Activated CD4-positive, alpha-beta T cell treated with anti-CD3 and anti-CD28 coated beads, Interleukin-2, amount 10 ng/mL, durations not matched to agents 24 days and 14 days (primary cell): ENCODE measurements at regions of chr12 and their contacts with region 1.

Region 1: DNA sequence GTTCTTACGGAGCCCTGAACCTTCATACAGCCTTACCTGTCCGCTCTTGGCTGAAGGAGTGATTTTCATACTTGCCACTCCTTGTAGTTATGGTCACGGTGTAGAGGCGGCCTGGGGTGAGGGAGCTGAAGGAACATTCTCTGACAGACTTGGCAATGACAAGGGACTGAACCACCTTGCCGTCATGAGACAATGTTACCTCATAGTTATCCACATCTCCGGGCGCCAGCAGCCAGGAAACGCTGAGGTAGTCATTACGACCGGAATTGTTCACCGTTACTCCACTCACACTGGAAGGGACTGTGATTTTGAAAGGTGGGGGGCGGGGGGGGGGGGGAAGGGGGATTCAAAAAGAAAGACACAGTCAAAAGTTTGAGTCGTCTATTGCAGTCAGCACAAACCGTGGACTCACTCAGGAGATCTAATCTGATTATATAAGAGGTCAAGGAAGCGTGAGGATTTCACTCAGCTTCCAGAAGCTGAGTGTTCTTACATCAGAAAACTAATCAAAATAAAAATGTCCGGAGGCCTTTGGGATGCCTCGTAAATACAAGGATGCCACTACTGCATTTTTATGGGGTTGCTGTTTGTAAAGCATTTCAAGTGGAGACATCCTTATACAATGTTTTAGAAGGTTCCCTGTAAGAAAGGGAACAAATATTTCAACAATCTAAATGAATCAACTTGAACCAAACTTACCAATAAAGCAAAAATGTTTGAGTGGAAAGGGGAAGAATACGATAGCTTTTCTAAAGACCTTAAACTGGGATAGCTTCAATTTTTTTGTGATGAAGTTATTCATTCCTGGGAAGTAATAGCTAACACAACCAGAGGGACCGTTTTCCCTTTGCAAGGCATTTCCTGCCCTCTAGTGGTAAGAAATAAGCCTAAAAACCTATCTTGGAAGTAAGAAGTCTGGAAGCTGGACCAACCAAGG is 60.6 kb downstream of the PTPRB start:
- DNase-seq: peak; percentile 57
- H3K4me3 Mint-ChIP-seq: no peak overlapping the region
- H3K27ac Mint-ChIP-seq: no peak overlapping the region
- H3K4me1 Mint-ChIP-seq: no peaks in the 10 kb centered on the region
- H3K27me3 Mint-ChIP-seq: peaks cover 2% of the 10 kb centered on the region

Region 2: DNA sequence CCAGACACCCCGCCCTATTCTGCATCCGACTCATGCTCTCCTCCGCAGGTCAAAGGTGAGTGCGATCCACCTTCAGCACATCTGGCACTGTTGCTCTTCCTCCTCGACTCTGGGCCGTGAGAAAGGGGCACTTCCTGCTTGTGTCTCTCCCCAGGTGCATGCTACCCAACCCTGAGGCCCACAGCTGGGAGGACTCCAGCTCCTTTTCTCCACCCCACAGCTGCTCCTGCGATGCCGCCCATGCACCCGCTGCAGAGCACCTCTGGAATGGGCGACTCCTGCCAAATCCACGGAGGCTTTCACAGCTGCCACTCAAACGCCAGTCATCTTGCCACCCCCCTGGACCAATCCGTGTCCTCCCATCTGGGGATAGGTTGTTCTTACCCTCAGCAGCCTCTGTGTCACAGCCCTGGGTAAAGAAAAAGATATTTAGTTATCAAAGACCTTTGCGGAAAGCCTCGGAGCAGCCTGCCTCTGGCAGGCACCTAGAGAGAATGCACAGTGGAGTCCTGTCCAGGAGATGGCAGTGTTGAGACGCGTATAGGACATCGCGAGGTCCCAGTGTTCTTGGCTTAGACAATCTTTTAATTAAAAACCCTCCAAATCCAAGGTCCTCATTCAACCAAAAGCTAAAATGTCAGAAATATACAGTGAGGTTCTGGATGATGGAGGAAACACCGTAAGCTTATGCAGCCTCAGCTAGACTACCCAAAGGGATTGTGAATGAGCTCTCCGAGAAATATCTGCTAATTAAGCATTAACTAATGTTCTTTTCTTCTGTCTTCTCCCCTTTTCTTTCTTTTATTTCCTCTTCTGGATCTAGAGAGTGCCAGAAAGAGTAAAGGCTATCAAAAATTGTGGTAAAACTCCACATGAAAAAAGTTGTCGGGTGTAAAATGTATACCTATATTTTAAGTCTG is 697.3 kb before region 1 on chr12:
- intact Hi-C with region 1: loop called (anchors 1 kb)
- DNase-seq: peak; percentile 87
- H3K4me3 Mint-ChIP-seq: no peak overlapping the region
- H3K27ac Mint-ChIP-seq: no peak overlapping the region
- H3K4me1 Mint-ChIP-seq: peaks cover 5% of the 10 kb centered on the region
- H3K27me3 Mint-ChIP-seq: peaks cover 16% of the 10 kb centered on the region

Region 3: GRCh38 chr12:69900720-69901131 is 675.9 kb before region 1 on chr12:
- intact Hi-C with region 1: loop called (anchors 1 kb)
- DNase-seq: peak; percentile 87
- H3K4me3 Mint-ChIP-seq: no peak overlapping the region
- H3K27ac Mint-ChIP-seq: no peak overlapping the region
- H3K4me1 Mint-ChIP-seq: no peaks in the 10 kb centered on the region
- H3K27me3 Mint-ChIP-seq: peaks cover 2% of the 10 kb centered on the region

Region 4: DNA sequence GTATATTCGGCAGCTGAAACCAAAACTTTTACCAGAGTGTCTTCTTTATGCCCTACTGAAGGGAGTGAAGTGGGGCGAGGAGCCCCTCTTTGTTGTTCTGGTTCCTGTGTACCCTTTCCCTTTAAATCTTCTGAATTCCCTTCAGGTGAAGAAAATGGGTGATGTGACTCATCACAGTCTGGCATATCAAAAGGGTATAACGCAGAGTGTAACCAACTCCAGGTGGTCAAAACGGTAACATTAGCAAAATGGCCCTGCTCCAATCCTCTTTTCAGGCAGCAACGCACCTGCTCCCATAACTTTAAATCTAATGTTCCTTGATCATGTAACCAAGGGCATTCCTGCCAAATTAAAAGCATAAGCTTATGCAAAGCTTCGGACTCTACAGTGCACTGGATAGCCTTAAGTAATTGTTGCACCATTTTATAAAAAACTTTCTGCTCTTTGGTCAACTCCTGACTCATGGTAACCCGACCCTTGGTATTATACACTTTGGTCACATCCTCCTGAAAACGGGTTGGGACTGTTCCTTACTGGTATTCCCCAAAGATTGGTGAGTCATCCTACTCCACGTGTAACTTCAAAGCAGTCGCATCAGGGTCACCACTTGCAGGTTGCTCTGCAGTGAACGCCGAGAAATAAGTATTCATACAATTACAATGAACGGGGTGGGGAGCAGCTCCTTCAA is 127.4 kb before region 1 on chr12:
- intact Hi-C with region 1: no loop called
- DNase-seq: no peak
- H3K4me3 Mint-ChIP-seq: no peak overlapping the region
- H3K27ac Mint-ChIP-seq: no peak overlapping the region
- H3K4me1 Mint-ChIP-seq: no peaks in the 10 kb centered on the region
- H3K27me3 Mint-ChIP-seq: no peaks in the 10 kb centered on the region

Region 5: GRCh38 chr12:70557583-70558191 is 18.9 kb before region 1 on chr12:
- intact Hi-C with region 1: no loop called
- DNase-seq: no peak
- H3K4me3 Mint-ChIP-seq: no peak overlapping the region
- H3K27ac Mint-ChIP-seq: no peak overlapping the region
- H3K4me1 Mint-ChIP-seq: no peaks in the 10 kb centered on the region
- H3K27me3 Mint-ChIP-seq: no peaks in the 10 kb centered on the region